Left lung (tissue), 14 donors: ENCODE measurements at regions of chr20 and their contacts with region 1.

Region 1: GRCh38 chr20:49132995-49133478 is 55.1 kb downstream of the STAU1 start:
- DNase-seq: peak in 2 of 4 donors; percentile 66 to 79
- ATAC-seq: peak; percentile 91
- H3K4me3 ChIP-seq: no peak overlapping the region
- H3K27ac ChIP-seq: no peak overlapping the region
- H3K4me1 ChIP-seq: no peaks in the 10 kb centered on the region
- H3K27me3 ChIP-seq: no peaks in the 10 kb centered on the region
- CTCF ChIP-seq: peak; percentile 44 to 46

Region 2: GRCh38 chr20:49074536-49074935 is 58.5 kb before region 1 on chr20:
- intact Hi-C with region 1: no loop called
- DNase-seq: no peak
- ATAC-seq: no peak
- H3K4me3 ChIP-seq: no peak overlapping the region
- H3K27ac ChIP-seq: no peak overlapping the region
- H3K4me1 ChIP-seq: no peaks in the 10 kb centered on the region
- H3K27me3 ChIP-seq: no peaks in the 10 kb centered on the region
- CTCF ChIP-seq: no peak

Region 3: DNA sequence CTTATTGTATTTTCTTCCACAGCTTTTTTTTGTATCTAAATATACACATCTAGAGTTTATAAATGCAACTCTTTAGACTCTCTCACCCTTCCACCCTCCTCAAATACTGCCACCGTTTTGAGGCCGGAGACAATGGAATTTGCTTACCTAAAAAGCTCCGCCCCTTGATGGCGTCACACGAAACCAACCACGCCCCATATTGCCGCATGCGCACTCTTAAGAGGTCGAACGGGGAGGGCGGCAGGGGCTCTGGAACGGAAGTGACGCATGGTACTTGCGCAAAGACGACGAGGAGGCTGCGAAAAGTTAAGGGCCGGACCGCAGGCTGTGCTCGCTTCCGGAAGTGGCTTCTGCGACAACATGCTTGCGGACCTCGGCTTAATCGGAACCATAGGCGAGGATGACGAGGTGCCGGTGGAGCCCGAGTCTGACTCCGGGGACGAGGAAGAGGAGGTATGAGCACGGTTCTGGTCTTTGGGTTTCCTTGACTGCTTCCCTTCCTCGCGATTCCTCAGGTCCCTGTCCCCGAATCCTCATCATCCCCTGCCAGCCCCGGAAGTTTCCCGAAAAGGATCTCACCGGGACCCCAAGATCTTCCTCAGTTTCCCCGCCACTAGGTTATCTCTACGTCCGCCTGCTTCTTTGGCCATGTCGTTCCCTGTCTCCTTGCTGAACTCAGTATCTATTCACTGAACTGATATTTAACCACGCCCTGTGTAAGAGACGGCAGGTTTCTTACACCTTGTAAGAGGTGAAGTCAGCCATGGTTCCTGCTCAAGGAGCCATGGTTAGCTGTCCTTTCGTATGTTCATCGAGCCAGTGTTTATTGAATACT is 86.3 kb after region 1 on chr20 and contains the start of gene DDX27:
- intact Hi-C with region 1: loop called in 1 of 2 experiments (anchors 5 kb)
- DNase-seq: peak; percentile 97 to 99 (median 98)
- ATAC-seq: peak; percentile 90
- H3K4me3 ChIP-seq: peak within 1 kb of the TSS; percentile 68 to 87
- H3K27ac ChIP-seq: peak within 1 kb of the TSS; percentile 81 to 86
- H3K4me1 ChIP-seq: peaks cover 8 to 29% of the 10 kb centered on the region in 2 donors
- H3K27me3 ChIP-seq: no peaks in the 10 kb centered on the region
- CTCF ChIP-seq: no peak
- polyA plus RNA-seq, gene DDX27: 45.6 to 49.5 (median 47.0) TPM